AG04450 (cell line): ENCODE measurements at regions of chr11 and their contacts with region 1.

Region 1: DNA sequence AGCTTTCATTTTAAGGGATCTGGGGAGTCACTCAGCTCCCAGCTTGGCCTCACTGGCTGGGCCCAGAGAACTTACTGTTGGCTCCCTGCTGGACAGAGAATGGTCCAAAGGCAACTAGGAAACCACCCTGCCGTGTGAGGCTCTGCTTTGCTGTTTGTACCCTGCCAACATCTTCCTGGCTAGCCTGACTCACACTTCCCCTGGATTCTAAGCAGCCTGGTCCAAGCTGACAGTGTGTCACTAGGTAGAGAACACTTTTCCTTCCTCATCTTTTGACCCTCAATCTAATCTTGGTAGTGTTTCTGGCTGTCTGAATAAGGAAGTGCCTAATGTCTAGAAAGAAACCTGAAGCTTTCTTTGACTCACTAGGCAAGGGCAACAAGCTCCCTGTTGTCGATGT is 76.7 kb downstream of the FAR1 start:
- DNase-seq: no peak
- H3K4me3 ChIP-seq: no peak overlapping the region
- H3K27ac ChIP-seq: no peak overlapping the region
- H3K27me3 ChIP-seq: no peaks in the 10 kb centered on the region
- CTCF ChIP-seq: no peak

Region 2: DNA sequence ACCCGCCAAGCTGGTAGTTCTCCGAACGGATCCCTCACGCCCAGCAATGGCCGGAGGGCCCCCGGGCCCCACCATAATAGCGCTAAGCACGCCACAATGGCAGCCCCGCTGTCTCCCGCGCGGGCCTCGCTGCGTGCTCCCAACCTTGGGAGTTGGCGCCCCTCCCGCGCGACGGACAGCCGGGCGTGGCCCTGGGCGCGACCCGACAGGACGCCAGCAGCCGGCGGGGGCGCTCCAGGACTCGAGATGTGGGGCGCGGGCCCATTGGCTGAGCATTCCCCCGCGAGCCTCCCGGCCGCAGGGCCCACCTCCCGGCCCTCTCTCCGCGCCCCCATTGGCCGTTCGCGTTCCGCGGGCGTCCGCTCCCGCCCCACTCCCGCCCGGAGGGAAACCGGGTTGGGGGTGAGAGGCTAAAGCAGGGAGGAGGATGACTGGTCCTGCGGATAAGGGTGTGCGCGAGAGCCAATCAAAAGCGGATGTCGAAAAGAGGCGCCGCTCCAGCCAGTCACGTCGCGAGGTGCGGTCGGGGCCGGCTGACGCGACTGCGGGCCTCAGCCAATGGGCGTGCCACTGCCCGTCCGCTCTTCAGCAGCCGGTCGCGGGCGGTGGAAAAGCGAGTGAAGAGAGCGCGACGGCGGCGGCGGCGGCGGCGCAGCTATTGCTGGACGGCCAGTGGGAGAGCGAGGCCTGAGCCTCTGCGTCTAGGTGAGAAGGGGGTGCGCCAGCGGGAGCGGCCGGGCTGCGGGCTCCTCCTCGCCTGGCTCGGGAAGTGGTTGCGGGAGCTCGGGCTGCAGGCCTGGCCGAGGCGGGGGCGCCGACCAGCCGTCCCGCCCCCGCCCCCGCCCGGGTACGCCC is 76.8 kb before region 1 on chr11 and contains the start of gene FAR1:
- CTCF ChIA-PET with region 1: interaction called, 13 read pairs
- POLR2A ChIA-PET with region 1: no interaction called
- DNase-seq: peak; percentile 98
- H3K4me3 ChIP-seq: peak within 1 kb of the TSS; percentile 81
- H3K27ac ChIP-seq: peak within 1 kb of the TSS; percentile 54
- H3K27me3 ChIP-seq: no peaks in the 10 kb centered on the region
- CTCF ChIP-seq: peak; percentile 47
- polyA plus RNA-seq, gene FAR1: 56.9 and 71.7 TPM in 2 replicates